ENCODE measurements at regions of chr16 and their contacts with region 1.

Region 1: DNA sequence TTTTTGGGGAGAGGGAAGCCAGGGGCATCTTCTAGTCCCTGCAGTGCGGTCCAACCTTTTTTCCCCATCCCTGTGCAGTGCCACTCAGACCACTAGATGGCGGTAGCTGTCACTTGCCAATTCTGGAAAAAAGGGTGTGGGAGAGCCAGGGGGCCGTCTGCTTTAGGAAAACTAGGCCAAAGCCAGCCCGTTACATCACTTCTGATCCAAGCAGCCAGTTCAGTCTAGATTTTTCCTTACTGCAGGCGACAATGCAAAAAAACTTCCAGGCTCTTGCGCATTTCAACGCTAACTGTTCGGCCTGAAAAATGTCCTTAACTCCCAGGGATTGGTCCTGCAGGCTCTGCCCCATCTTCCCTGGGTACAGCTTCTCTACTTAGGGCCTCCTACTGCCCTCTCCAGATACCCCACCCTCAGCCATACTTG is 69.2 kb upstream of the CES5A start:
- DNase-seq: peak; percentile 63 to 89 (median 70)
- H3K4me3 ChIP-seq: no peak overlapping the region
- H3K27ac ChIP-seq: peak overlapping the region in 1 of 5 donors; percentile 39
- H3K4me1 ChIP-seq: no peaks in the 10 kb centered on the region
- H3K27me3 ChIP-seq: no peaks in the 10 kb centered on the region
- CTCF ChIP-seq: peak; percentile 74 to 91 (median 88)
- POLR2A ChIP-seq: no peak

Region 2: GRCh38 chr16:56317998-56318826 is 373.8 kb after region 1 on chr16:
- intact Hi-C with region 1: loop called (anchors 2 to 5 kb)
- DNase-seq: peak; percentile 71 to 93 (median 85)
- H3K4me3 ChIP-seq: peak overlapping the region in 1 of 4 donors; percentile 41
- H3K27ac ChIP-seq: peak overlapping the region in 1 of 5 donors; percentile 66
- H3K4me1 ChIP-seq: peaks cover 0 to 5% of the 10 kb centered on the region in 2 donors
- H3K27me3 ChIP-seq: no peaks in the 10 kb centered on the region
- CTCF ChIP-seq: peak; percentile 89 to 97 (median 94)
- POLR2A ChIP-seq: no peak